ENCODE measurements at regions of chr6 and their contacts with region 1.

Region 1: GRCh38 chr6:32838114-32838958 is at the start of gene TAP2:
- DNase-seq: peak; percentile 97
- ATAC-seq: peak; percentile 88
- H3K4me3 Mint-ChIP-seq: peak within 1 kb of the TSS; percentile 72
- H3K27ac Mint-ChIP-seq: no peak within 1 kb of the TSS
- H3K4me1 Mint-ChIP-seq: peaks cover 17% of the 10 kb centered on the region
- H3K27me3 Mint-ChIP-seq: peaks cover 55% of the 10 kb centered on the region
- CTCF ChIP-seq: peak; percentile 85
- total RNA-seq, gene TAP2: 14.7 to 23.0 TPM (median 16.5 TPM) in 3 replicates

Region 2: GRCh38 chr6:32752580-32752979 is 85.8 kb before region 1 on chr6:
- CTCF ChIA-PET with region 1: no interaction called
- POLR2A ChIA-PET with region 1: no interaction called
- DNase-seq: no peak
- ATAC-seq: no peak
- H3K4me3 Mint-ChIP-seq: no peak overlapping the region
- H3K27ac Mint-ChIP-seq: no peak overlapping the region
- H3K4me1 Mint-ChIP-seq: peaks cover 10% of the 10 kb centered on the region
- H3K27me3 Mint-ChIP-seq: peaks cover 3% of the 10 kb centered on the region; the same call in 1 of the 2 replicates
- CTCF ChIP-seq: no peak

Region 3: DNA sequence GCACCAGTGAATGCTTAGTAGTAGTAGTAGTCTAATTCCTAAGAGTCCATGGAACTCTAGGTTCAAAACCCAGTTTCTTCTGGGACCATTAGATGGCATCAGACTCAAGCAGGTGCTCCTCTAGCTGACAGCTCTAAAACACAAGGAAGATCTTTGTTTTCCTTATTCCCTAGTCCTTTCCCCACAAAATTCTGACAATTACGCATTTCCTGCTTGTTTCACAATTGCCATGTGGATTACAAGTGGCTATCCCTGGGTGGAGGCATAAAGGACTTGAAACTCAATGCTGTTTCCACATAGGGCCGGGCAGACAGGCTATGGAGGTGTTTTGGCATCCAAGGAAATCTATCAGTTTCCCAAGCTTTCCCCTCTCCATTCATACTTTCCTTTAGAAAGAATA is 12.4 kb before region 1 on chr6:
- CTCF ChIA-PET with region 1: interaction called, 82 read pairs
- POLR2A ChIA-PET with region 1: interaction called, 4 read pairs
- DNase-seq: no peak
- ATAC-seq: peak; percentile 86
- H3K4me3 Mint-ChIP-seq: no peak overlapping the region
- H3K27ac Mint-ChIP-seq: peak overlapping the region; percentile 68; the same call in 1 of the 2 replicates
- H3K4me1 Mint-ChIP-seq: peaks cover 9% of the 10 kb centered on the region
- H3K27me3 Mint-ChIP-seq: no peaks in the 10 kb centered on the region
- CTCF ChIP-seq: no peak

Region 4: GRCh38 chr6:32868257-32868788 is 30.0 kb after region 1 on chr6:
- CTCF ChIA-PET with region 1: interaction called, 243 read pairs
- POLR2A ChIA-PET with region 1: interaction called, 3 read pairs
- DNase-seq: peak; percentile 79
- ATAC-seq: peak; percentile 50
- H3K4me3 Mint-ChIP-seq: no peak overlapping the region
- H3K27ac Mint-ChIP-seq: no peak overlapping the region
- H3K4me1 Mint-ChIP-seq: no peaks in the 10 kb centered on the region
- H3K27me3 Mint-ChIP-seq: peaks cover 16% of the 10 kb centered on the region
- CTCF ChIP-seq: peak; percentile 86

Region 5: DNA sequence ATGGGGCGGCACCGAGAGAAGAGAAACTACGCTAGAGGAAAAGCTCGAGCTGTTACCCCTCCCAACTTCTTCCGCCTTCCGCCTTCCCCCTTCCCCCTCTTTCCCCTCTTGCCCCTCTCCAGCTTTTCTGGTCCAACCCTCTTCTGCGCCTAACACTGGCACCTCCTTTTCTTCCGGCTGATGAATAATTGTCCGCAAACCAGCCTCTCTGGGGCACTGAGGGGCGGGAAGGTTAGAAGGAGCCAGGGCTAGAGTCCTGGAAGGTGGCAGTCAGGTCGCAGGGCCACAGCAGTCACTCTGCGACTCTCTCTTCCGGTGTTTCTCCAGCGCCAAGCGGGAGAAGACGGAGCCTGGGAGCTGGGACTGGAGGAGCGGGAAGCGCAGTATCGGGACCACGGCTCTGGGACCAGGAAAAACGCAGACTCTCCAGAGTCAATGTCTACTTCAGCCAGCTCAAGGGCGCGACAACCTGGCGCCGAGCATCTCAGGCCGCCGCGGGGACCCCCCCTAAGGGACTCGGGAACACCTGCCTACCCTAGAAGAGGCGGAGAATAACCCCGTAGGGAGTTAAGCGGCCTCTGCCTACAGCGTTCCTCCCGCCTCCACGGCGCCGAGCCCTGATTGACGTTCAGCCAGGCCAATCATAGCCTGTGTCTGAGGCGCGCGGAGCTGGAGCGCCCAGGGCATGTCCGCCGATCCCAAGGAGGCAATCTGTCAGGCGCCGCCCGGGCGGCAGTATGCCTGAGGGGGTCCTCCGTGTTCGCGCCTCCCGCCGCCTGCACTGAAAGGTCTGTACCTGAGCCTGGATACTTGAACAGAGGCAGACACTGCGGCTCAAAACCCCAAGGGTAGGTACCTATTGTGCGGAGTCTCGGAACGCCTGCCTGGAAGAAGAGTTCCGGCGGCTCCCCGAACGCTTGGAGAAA is 56.0 kb after region 1 on chr6:
- CTCF ChIA-PET with region 1: interaction called, 37 read pairs
- POLR2A ChIA-PET with region 1: no interaction called
- DNase-seq: peak; percentile 96
- ATAC-seq: peak; percentile 98
- H3K4me3 Mint-ChIP-seq: peak overlapping the region; percentile 98
- H3K27ac Mint-ChIP-seq: peak overlapping the region; percentile 99
- H3K4me1 Mint-ChIP-seq: peaks cover 13% of the 10 kb centered on the region
- H3K27me3 Mint-ChIP-seq: peaks cover 3% of the 10 kb centered on the region; the same call in 1 of the 2 replicates
- CTCF ChIP-seq: no peak

Region 6: DNA sequence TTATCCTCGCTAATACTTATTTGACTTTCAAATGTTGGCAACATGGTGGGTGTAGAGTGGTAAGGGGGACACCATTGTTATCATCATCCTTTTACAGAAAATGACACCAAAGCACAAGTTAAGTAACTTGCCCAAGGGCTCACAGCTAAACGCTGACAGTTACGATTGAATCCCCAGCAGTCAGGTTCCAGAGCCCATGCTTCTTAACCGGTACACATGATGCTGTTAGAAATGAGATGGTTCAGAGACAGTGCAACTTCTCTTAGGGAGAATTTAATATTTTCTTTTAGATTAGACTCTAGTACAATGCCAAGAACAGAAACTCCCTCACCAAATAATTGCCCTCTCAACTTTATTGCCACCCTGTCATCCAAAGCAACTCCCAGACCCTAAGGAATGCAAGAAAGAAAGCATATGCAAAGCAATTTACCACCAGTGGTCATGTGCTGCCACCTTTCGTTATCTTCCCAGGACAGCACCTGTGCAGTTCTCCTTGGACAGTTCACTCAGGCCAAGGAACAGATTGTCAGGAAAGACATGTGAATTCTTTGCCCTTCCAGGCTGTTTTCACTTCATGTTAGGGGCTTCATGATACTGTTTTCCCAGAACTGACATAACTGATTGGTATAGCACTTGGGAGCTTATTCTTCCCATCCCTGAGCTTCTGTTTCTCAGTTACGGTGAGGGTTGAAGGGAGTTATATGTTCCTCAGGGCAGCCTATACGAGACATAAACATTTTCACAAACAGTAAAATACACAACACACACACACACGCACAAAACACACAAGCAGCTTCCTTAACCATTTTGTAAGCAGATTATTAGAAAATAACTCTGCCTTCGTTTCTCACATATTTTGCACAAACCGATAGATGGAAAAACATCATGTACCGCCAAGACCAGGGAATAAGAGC is 109.5 kb after region 1 on chr6:
- CTCF ChIA-PET with region 1: interaction called, 61 read pairs
- POLR2A ChIA-PET with region 1: interaction called, 5 read pairs
- DNase-seq: peak; percentile 63
- ATAC-seq: peak; percentile 97
- H3K4me3 Mint-ChIP-seq: no peak overlapping the region
- H3K27ac Mint-ChIP-seq: peak overlapping the region; percentile 32; the same call in 1 of the 2 replicates
- H3K4me1 Mint-ChIP-seq: peaks cover 13% of the 10 kb centered on the region; the same call in 1 of the 2 replicates
- H3K27me3 Mint-ChIP-seq: no peaks in the 10 kb centered on the region
- CTCF ChIP-seq: peak; percentile 35; the same call in 1 of the 2 replicates

Measured in WTC11 (cell line).